OCI-LY7 (cell line): ENCODE measurements at regions of chr4 and their contacts with region 1.

Region 1: GRCh38 chr4:77433418-77433733 is 172.2 kb upstream of the CXCL13 start:
- DNase-seq: peak; percentile 48
- H3K4me3 ChIP-seq: no peak overlapping the region
- H3K27ac ChIP-seq: no peak overlapping the region
- H3K4me1 ChIP-seq: no peaks in the 10 kb centered on the region
- CTCF ChIP-seq: peak; percentile 73

Region 2: DNA sequence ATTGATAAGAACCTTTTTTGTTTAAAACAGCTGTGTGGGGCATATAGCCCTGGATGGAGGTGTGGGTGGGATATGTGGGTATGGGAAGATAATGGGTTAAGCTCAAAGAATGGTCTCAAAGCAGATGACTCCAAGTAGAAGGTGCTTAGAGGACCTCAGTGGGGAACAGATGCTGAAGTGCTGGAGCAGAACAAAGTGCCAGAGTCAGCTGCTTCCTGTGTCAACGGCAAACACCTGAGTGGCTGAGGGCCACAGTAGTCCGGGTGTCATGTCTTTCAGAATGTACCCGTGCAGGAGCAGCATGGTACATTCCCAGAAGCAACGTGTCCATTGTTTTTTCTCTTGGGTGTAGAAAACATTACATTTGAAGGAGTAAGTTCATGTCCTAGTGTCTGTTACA is 65.7 kb before region 1 on chr4:
- CTCF ChIA-PET with region 1: no interaction called
- POLR2A ChIA-PET with region 1: no interaction called
- intact Hi-C with region 1: loop called (anchors 1 kb)
- DNase-seq: peak; percentile 30
- H3K4me3 ChIP-seq: no peak overlapping the region
- H3K27ac ChIP-seq: no peak overlapping the region
- H3K4me1 ChIP-seq: no peaks in the 10 kb centered on the region
- CTCF ChIP-seq: no peak

Region 3: GRCh38 chr4:77385124-77385969 is 48.0 kb before region 1 on chr4:
- CTCF ChIA-PET with region 1: no interaction called
- POLR2A ChIA-PET with region 1: no interaction called
- intact Hi-C with region 1: loop called (anchors 1 kb)
- DNase-seq: peak; percentile 55
- H3K4me3 ChIP-seq: no peak overlapping the region
- H3K27ac ChIP-seq: no peak overlapping the region
- H3K4me1 ChIP-seq: no peaks in the 10 kb centered on the region
- CTCF ChIP-seq: peak; percentile 89